Dorsolateral prefrontal cortex (tissue), 120 donors: ENCODE measurements at regions of chr11 and their contacts with region 1.

Region 1: DNA sequence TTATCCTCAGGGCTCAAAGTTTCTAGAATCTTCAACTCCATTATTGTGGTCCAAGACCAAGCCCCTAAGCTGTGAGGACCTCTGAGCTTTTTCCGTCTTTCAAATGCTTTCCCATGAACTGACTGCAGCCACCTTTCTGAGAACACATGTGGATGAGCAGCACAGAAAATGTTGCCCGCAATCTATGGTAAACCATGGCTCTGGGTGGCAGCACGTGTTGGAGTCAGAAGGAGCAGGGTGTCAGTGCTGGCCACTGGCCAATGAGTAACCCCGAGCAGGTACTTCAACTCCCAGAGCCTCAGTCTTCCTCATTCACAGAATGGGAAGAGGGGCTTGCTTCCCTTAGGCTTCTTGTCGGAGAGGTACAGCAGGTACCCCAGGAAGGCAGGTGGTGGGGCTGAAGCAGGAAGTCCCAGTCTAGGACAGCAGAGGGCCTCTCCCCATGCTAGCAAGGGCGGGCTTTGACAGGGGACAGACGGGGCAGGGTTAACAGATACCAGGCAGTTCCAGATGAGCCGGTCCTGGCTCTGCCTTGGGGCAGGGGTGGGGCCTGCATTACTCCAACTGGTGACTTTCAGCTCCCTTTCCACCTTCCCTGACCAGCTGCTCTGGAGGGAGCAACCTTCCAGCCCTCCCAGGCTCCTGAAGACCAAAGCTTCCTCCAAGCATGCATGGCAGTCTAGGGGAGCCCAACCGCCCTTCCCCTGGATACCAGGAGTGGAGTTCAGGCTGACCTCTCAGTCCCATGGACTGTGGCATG is 60.3 kb downstream of the NAT10 start:
- DNase-seq: no peak
- H3K4me3 ChIP-seq: no peak overlapping the region
- H3K27ac ChIP-seq: no peak overlapping the region
- H3K27me3 ChIP-seq: no peaks in the 10 kb centered on the region
- CTCF ChIP-seq: no peak

Region 2: DNA sequence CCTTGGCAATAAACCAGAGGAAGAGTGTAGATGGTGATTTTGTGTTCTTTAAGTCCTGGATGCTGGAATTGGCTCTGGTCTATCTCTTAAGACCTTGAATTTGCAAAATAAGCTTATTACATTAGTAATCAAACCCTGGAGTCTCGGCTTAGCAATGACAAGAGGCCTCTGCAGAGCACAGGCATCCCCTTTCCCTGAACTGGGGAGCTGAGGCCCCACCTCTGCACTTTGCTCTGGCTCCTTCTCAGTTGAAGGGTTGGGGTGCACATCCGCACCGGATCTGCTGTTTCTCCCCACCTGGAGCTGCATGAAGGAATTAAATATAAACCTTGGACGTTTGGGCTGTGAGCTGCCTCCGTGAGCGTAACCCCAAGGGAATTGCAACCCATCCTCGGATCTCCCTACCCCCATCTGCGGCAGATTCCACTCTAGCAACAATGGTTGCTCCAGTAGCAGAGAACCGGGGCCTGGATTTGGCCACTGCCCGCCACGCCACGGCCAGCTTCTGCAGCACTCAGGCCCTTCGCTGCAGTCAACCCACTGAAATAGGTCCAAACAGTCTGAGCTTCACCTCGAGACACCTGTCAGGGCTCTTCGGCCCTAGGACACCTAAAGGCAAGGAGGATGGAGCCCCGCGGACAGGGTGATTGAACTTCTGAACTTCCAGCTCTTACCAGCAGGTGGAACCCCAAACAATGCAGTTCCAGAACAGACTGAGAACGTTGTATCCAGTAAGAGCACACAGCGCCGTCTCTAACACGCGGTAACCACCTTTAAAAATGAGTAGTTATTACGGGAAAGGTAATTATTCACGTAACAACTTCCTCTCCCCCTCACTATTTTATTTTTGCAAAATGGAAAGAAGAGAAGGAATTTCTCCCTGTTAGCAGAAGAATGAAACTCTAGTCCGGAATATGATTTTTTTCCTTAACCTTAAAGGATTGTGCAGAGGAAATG is 168.9 kb before region 1 on chr11:
- intact Hi-C with region 1: loop called in 1 of 2 experiments (anchors 5 kb)
- DNase-seq: peak; percentile 31 to 72 (median 60)
- H3K4me3 ChIP-seq: peak overlapping the region in 45 of 59 donors; percentile 1 to 50 (median 30)
- H3K27ac ChIP-seq: peak overlapping the region in 17 of 59 donors; percentile 7 to 65 (median 41)
- H3K27me3 ChIP-seq: peaks cover 0 to 3% (median 0%) of the 10 kb centered on the region in 45 donors
- CTCF ChIP-seq: peak; percentile 54 to 93 (median 87)

Region 3: GRCh38 chr11:34114471-34114870 is 51.2 kb before region 1 on chr11:
- intact Hi-C with region 1: loop called in 1 of 2 experiments (anchors 5 kb)
- DNase-seq: no peak
- H3K4me3 ChIP-seq: no peak overlapping the region
- H3K27ac ChIP-seq: no peak overlapping the region
- H3K27me3 ChIP-seq: no peaks in the 10 kb centered on the region
- CTCF ChIP-seq: no peak

Region 4: GRCh38 chr11:34464591-34465051 is 298.9 kb after region 1 on chr11:
- intact Hi-C with region 1: no loop called
- DNase-seq: peak in 3 of 10 donors; percentile 44 to 54 (median 46)
- H3K4me3 ChIP-seq: no peak overlapping the region
- H3K27ac ChIP-seq: peak overlapping the region in 17 of 59 donors; percentile 2 to 68 (median 46)
- H3K27me3 ChIP-seq: no peaks in the 10 kb centered on the region
- CTCF ChIP-seq: no peak